Testis (tissue), 5 donors: ENCODE measurements at regions of chr21 and their contacts with region 1.

Region 1: DNA sequence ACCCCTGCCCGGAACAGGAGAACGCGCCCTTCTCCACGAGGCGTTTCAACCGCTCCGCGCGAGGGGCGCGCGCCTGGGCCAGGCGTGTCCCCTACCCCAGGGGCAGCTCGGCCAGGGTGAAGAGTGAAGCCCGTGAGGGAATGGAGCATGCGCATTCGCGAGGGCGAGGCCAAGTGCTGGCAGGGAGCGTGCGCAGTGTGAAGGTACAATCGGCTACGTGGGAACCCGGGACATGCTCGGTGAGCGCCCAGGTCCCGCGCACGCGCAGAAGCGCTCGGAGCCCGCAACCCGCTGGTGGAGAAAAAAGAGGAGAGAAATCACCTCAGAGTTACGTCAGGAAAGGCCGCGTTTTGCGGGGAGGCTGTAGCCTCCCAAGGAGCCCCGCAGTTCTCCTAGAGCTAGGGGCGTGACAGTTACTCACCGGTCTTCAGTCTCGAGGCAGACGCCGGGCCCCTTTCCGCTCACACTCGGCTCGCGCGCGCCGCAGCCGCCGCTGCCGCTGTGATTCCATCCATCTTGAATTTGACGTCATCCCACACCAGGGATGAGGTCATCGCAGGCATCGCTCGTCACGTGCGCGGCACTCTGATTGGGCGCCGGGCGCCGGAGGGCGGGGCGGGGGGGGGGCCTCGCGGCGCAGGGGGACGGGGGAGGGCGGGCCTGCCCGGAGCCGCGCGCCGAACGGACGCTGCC is at the start of gene ZBTB21:
- DNase-seq: peak; percentile 98
- H3K4me3 ChIP-seq: peak within 1 kb of the TSS; percentile 92 to 97
- H3K27ac ChIP-seq: peak within 1 kb of the TSS; percentile 98 to 100
- H3K4me1 ChIP-seq: peaks cover 10% of the 10 kb centered on the region
- H3K27me3 ChIP-seq: no peaks in the 10 kb centered on the region
- CTCF ChIP-seq: no peak
- POLR2A ChIP-seq: peak; percentile 46
- total RNA-seq, gene ZBTB21: 26.3 to 30.9 TPM

Region 2: DNA sequence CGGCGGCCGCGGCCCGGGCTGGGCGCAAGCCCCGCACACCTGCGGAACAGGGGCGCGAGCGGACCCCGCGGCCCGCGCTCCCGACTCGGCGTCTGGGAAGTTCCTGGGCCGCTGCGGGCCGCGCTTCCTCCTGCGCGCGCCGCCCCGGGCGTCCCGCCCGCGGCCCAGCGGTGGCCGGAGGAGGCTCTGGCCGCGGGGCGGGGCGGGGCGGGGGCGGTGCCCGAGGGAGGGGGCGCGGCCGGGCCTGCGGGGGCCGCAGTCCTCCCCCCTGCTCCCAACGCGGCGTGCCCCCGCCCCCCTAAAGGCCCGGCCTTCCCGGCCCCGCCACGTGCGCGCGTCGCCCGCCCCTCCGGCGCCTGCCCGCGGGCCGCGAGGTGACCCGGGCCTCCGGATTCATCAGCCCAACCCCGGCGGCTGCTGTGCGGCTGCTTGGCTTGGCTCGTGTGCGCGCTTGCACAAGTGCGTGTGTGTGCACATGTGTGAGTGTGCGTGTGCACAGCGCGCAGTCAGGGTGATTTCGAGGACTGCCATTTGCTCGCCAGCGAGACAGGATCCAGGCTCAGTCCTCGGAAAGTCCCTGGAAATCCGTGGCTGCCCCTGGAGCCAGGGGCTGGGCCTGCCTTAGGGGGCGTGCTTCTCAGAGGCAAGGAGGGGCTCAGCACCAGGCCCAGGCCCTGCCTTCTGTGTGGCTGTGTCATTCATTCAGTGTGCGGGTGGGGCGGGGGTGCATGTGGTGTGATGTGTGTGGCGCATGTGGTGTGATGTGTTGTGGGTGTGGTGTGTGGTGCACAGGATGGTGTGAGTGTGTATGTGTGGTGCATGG is 55.9 kb before region 1 on chr21 and contains the start of gene C2CD2:
- intact Hi-C with region 1: loop called (anchors 10 kb)
- DNase-seq: no peak
- H3K4me3 ChIP-seq: peak within 1 kb of the TSS; percentile 68 to 70
- H3K27ac ChIP-seq: peak within 1 kb of the TSS in 1 of 2 donors; percentile 45
- H3K4me1 ChIP-seq: peaks cover 17% of the 10 kb centered on the region
- H3K27me3 ChIP-seq: no peaks in the 10 kb centered on the region
- CTCF ChIP-seq: no peak
- POLR2A ChIP-seq: no peak
- total RNA-seq, gene C2CD2: 13.2 to 17.4 TPM